ENCODE measurements at regions of chr4 and their contacts with region 1.

Region 1: DNA sequence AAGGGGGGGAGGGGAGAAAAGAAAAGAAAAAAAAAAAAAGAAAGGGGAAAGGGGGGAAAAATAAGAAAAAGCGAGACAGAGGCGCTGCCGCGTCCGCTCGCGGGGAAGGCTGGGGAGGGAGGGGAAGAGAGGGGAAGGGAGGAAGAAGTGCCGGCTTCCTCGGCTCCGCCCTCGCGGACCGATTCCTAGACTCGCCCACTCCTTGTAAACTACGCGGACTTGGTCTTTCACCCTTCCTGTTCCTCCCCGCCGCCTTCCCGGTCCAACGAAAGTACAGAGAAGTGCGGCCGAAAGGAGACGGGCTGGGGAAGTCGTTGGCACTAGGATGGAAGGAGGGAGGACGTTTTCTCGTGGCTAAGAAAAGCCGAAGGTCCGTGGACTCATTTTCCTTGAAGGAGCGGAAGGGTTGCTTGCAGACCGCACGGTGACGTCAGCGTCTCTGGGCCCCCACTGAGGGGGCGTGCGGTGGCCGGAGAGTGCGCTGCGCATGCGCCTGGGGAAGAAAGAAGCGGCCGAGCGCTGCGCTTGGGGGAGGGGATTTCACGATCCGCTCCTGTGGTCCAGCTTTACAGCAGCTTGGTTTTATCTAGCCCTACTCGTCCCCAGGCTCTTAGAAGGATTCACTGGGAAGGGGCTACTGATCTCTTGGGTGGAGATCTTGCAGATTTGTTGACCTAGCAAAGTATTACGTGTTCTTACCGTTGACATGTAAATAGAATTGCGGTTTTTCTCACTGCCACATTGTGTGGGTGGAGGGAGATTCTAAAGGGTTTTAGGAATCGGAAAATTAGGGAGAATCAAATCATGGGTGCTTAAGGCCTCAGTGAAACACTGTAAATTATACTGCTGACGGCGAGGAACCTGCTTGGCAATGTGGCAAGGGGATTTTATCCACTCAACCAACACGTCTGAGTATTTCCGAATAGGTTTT is at the start of gene CCNI:
- DNase-seq: peak; percentile 62 to 87
- H3K4me3 ChIP-seq: peak within 1 kb of the TSS; percentile 62
- H3K27ac ChIP-seq: peak within 1 kb of the TSS; percentile 86
- H3K4me1 ChIP-seq: no peaks in the 10 kb centered on the region
- H3K27me3 ChIP-seq: no peaks in the 10 kb centered on the region
- CTCF ChIP-seq: no peak
- total RNA-seq, gene CCNI: 155 and 238 TPM in 2 replicates

Region 2: DNA sequence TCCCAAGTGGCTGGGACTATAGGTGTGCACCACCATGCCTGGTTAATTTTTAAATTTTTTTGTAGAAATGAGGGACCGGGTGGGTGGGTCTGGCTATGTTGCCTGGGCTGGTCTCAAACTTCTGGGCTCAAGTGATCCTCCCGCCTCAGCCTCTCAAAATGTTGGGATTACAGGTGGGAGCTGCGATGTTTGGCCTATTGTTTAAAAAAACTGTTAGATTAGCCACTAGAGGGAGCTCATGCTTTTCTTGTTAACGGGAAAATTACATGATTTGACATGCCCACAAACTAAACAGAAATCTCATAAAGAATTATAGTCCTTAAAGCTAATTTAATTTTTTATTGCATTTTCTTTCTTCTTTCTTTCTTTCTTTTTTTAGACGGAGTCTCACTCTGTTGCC is 1080.4 kb before region 1 on chr4:
- CTCF ChIA-PET with region 1: no interaction called
- POLR2A ChIA-PET with region 1: interaction called, 15 read pairs
- intact Hi-C with region 1: no loop called
- DNase-seq: peak in 1 of 2 experiments; percentile 44
- H3K4me3 ChIP-seq: no peak overlapping the region
- H3K27ac ChIP-seq: no peak overlapping the region
- H3K4me1 ChIP-seq: peaks cover 4% of the 10 kb centered on the region; the same call in 1 of the 2 replicates
- H3K27me3 ChIP-seq: no peaks in the 10 kb centered on the region
- CTCF ChIP-seq: peak; percentile 76

Region 3: DNA sequence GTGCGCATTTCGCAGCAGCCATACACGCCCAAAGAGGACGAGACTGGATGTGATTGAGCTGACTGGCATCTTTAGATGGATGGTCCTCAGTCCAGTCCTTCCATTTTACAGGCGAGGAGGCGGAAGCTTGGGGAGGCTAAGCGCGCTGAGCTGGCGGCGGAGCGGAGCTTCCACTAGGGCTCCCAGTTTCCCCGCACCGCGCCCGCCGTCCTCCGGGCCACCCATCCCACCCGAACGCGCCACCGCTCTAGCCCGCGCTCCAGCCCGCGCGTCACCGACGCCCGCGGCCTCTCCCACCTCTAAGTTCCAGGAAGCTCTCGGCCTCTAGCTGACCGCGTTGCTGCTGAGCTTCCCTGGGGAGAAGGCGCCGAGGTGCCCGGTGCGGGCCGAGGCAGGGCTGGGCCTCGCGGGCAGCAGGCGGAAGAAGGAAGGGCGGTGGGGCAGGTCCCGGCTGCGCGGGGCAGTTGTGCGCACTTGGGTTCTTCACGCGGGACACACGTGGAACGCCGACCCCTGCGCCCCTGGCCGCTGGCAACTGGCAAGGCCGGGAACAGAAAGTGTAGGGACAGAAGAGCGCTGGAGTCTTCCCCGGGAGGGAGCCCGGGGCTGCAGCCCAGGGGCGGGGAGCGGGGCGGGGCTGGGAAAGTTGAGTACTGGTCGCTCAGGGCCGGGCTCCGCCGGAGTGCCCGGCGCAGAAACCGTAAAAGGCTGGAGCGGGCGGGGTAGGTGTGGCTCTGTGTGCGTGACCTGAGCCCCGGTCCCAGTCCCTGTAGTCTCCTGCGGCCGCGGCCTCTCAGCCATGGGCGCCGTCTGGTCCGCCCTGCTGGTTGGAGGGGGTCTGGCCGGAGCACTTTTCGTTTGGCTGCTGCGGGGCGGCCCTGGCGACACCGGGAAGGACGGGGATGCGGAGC is 769.9 kb before region 1 on chr4 and contains the start of gene STBD1:
- CTCF ChIA-PET with region 1: no interaction called
- POLR2A ChIA-PET with region 1: interaction called, 26 read pairs
- intact Hi-C with region 1: no loop called
- DNase-seq: peak; percentile 54 to 73
- H3K4me3 ChIP-seq: peak within 1 kb of the TSS; percentile 87
- H3K27ac ChIP-seq: peak within 1 kb of the TSS; percentile 58
- H3K4me1 ChIP-seq: peaks cover 20% of the 10 kb centered on the region
- H3K27me3 ChIP-seq: no peaks in the 10 kb centered on the region
- CTCF ChIP-seq: no peak
- total RNA-seq, gene STBD1: 1.8 and 3.5 TPM in 2 replicates

Region 4: DNA sequence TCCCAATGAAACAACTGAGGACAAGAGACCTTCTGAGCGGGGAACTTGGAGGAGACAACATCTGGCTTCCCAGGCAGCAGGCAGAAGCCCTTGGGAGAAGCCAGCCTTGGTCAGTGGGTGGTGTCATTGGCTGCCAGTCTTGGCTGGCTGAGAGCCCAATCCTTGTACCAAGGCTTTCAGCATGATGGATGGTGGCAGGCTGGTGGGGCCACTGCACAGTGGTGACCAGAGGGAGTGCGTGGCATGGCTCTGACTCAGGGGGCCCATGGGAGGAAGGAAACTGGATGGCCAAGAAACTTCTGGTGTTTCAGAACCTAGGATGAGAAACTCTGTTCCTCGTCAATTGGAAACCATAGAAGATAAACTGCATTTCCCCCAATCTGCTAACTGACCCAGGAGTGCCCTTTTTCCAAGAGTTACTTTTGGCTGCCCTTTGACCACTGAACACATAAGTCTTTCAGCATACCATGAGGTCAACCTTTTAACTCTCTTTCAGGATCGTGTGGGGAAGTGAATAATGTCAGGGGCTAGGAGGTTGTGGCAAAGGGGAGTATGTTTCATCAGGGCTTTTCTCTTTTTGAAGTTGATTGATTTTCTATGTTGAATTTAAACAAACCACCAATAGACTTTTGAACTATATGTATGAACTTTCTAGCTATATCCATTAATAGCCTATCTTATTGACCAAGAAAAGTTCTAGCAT is 239.1 kb before region 1 on chr4:
- CTCF ChIA-PET with region 1: no interaction called
- POLR2A ChIA-PET with region 1: no interaction called
- intact Hi-C with region 1: no loop called
- DNase-seq: no peak
- H3K4me3 ChIP-seq: no peak overlapping the region
- H3K27ac ChIP-seq: no peak overlapping the region
- H3K4me1 ChIP-seq: no peaks in the 10 kb centered on the region
- H3K27me3 ChIP-seq: no peaks in the 10 kb centered on the region
- CTCF ChIP-seq: no peak

Region 5: DNA sequence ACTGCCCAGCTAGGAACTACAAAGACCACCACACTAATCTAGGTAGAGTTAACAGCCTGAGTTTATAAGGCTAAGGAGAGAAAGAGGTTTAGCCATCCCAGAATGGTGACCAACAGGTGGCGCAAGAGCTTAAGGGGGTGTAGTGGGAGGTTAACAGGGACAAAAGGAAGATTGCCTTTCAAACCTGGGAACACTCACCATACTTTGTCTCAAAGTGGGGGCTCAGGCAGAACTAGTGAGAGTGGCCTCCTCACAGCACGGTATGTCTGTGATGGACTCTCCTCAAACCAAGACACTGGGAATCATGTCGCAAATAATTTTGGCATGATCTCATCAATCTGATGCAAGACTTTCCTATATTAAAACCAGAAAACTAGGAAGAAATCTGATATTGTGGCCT is 23.8 kb before region 1 on chr4:
- CTCF ChIA-PET with region 1: no interaction called
- POLR2A ChIA-PET with region 1: interaction called, 12 read pairs
- intact Hi-C with region 1: no loop called
- DNase-seq: peak in 1 of 2 experiments; percentile 34
- H3K4me3 ChIP-seq: no peak overlapping the region
- H3K27ac ChIP-seq: peak overlapping the region; percentile 34; the same call in 1 of the 2 replicates
- H3K4me1 ChIP-seq: no peaks in the 10 kb centered on the region
- H3K27me3 ChIP-seq: no peaks in the 10 kb centered on the region
- CTCF ChIP-seq: peak; percentile 40; the same call in 1 of the 2 replicates

Region 6: DNA sequence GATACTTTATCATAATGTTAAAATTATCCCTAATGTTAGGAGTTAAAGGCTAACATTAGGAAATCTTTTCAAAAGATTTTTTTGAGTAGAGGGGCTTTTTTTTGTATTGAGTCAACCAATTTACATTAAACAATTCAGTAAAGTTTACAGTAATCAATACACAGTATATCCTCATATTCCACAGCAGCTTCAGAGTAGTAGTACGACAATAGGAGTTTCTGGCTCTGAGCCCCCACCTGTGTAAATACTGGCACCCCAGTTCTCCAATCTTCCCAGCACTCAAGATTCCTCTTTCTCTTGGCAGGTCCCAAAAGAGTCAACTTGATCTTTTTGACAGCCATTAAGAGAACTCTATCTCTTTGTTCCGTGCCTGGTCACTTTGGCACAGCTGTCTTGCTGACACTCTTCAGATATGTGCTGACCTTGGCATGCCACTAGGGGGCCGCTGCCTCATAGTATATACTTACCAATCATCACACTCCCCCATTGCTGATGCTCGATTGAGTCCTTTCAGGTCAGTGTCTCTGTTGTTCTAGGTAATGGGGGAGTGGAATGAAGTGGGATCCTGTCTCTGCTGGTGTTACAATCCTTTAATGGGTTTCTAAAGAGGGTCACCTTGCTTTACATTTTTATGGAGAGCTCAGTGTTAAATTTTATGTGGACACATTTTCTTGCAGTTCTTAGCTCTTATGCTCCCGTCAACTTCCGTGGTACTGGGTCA is 19.1 kb after region 1 on chr4:
- CTCF ChIA-PET with region 1: no interaction called
- POLR2A ChIA-PET with region 1: interaction called, 10 read pairs
- intact Hi-C with region 1: loop called (anchors 2 kb)
- DNase-seq: peak in 1 of 2 experiments; percentile 30
- H3K4me3 ChIP-seq: no peak overlapping the region
- H3K27ac ChIP-seq: no peak overlapping the region
- H3K4me1 ChIP-seq: no peaks in the 10 kb centered on the region
- H3K27me3 ChIP-seq: no peaks in the 10 kb centered on the region
- CTCF ChIP-seq: peak; percentile 68

Region 7: GRCh38 chr4:77156533-77156911 is 80.4 kb after region 1 on chr4:
- CTCF ChIA-PET with region 1: no interaction called
- POLR2A ChIA-PET with region 1: interaction called, 18 read pairs
- intact Hi-C with region 1: loop called (anchors 1 kb)
- DNase-seq: peak; percentile 93 to 97
- H3K4me3 ChIP-seq: peak overlapping the region; percentile 61; the same call in 1 of the 2 replicates
- H3K27ac ChIP-seq: peak overlapping the region; percentile 76
- H3K4me1 ChIP-seq: peaks cover 50% of the 10 kb centered on the region
- H3K27me3 ChIP-seq: no peaks in the 10 kb centered on the region
- CTCF ChIP-seq: no peak

Measured in PC-9 (cell line).